OCI-LY7 (cell line): ENCODE measurements at regions of chr3 and their contacts with region 1.

Region 1: GRCh38 chr3:157088601-157089454 is 71.1 kb downstream of the CCNL1 start:
- DNase-seq: peak; percentile 95
- H3K4me3 ChIP-seq: peak overlapping the region; percentile 72
- H3K27ac ChIP-seq: peak overlapping the region; percentile 77
- H3K4me1 ChIP-seq: peaks cover 24% of the 10 kb centered on the region
- CTCF ChIP-seq: peak; percentile 43; the same call in 1 of the 2 replicates

Region 2: GRCh38 chr3:156554842-156555687 is 533.8 kb before region 1 on chr3 and contains the start of gene SSR3:
- CTCF ChIA-PET with region 1: no interaction called
- POLR2A ChIA-PET with region 1: interaction called, 13 read pairs
- intact Hi-C with region 1: loop called (anchors 2 kb)
- DNase-seq: peak; percentile 99
- H3K4me3 ChIP-seq: peak within 1 kb of the TSS; percentile 96
- H3K27ac ChIP-seq: peak within 1 kb of the TSS; percentile 28
- H3K4me1 ChIP-seq: peaks cover 11% of the 10 kb centered on the region
- CTCF ChIP-seq: no peak
- total RNA-seq, gene SSR3: 61.2 and 63.3 TPM in 2 replicates

Region 3: DNA sequence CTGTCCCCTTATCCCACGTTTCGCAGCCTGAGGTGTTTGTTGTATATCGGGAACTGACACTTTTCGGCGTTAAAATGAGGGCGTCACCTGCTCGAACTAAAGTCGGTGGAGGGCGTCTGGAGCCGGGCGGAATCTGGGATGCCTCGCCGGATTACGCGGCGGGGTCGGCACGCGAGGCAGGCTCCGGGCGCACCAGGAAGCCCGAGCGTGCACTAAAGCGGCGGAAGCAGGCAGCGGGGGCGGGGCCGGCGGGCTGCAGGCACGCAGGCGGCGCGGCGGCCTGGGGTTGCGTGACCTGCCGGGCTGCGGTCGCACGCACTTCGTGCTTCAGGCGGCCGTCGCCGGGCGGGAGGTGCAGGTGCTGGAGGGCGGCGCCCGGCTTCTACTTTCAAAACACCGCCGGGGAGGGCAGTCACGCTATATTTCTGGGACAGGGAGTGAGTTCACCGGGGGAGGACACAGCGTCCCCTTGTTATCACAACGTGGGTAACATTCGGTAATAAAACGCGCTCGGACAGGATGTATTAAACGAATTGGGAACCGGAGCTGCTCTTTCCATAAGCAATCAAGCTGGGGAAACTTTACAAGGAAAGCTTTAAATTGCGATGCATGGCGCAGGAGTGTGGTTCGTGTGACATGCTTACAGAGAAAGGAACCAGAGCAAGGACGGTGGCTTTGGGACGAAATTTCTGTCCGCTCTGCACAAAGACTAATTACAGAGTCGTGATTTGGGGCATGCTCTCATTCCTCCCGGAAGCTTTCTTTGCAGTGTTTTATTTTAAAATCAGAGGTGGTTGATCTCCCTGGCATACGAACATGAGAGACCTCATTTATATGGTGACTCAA is 271.8 kb before region 1 on chr3:
- CTCF ChIA-PET with region 1: no interaction called
- POLR2A ChIA-PET with region 1: interaction called, 12 read pairs
- intact Hi-C with region 1: loop called (anchors 1 kb)
- DNase-seq: peak; percentile 72
- H3K4me3 ChIP-seq: peak overlapping the region; percentile 65
- H3K27ac ChIP-seq: no peak overlapping the region
- H3K4me1 ChIP-seq: peaks cover 6% of the 10 kb centered on the region
- CTCF ChIP-seq: no peak; the same call in 1 of the 2 replicates

Region 4: DNA sequence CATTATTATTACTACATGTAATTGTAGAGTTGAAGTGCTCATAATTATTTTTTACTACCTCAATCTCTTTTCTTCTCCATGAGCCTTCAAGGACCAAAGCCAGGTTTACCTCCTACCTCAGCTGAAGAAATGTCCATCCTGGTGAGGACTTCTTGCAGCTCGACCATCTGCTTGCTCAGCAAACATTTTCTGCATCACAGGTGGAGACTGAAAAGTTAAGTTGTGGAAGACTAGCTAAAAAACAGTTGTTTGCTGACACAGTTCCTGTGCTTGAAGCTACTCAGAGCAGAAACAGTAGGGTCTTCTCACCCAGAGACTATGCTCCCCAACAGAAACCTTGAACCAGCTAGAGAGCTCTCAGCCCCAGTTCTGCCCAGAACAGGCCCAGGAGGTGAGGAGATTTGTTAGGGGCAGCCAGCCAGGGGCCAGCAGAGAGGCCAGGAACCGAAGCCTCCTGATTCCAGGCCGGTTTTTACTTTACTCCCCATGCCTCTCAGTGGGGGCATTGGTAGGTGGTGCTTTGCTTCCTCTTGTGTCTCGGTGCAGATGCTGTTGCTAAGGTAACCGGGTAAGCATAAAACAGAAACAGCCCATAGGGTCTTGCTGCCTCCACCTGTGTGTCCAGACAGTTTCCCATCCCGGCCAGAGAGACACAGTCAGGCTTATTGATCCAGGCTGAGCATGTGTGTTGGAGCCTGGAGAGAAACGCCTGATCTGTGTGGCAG is 16.3 kb after region 1 on chr3:
- CTCF ChIA-PET with region 1: interaction called, 5 read pairs
- POLR2A ChIA-PET with region 1: interaction called, 171 read pairs
- intact Hi-C with region 1: no loop called
- DNase-seq: peak; percentile 87
- H3K4me3 ChIP-seq: peak overlapping the region; percentile 43
- H3K27ac ChIP-seq: peak overlapping the region; percentile 69
- H3K4me1 ChIP-seq: peaks cover 34% of the 10 kb centered on the region
- CTCF ChIP-seq: no peak

Region 5: GRCh38 chr3:157130467-157131251 is 41.8 kb after region 1 on chr3:
- CTCF ChIA-PET with region 1: interaction called, 5 read pairs
- POLR2A ChIA-PET with region 1: interaction called, 23 read pairs
- intact Hi-C with region 1: loop called (anchors 2 kb)
- DNase-seq: peak; percentile 46
- H3K4me3 ChIP-seq: no peak overlapping the region
- H3K27ac ChIP-seq: no peak overlapping the region
- H3K4me1 ChIP-seq: peaks cover 21% of the 10 kb centered on the region
- CTCF ChIP-seq: peak; percentile 87

Region 6: GRCh38 chr3:157174649-157175498 is 86.0 kb after region 1 on chr3:
- CTCF ChIA-PET with region 1: no interaction called
- POLR2A ChIA-PET with region 1: interaction called, 20 read pairs
- intact Hi-C with region 1: no loop called
- DNase-seq: peak; percentile 100
- H3K4me3 ChIP-seq: peak overlapping the region; percentile 88
- H3K27ac ChIP-seq: peak overlapping the region; percentile 86
- H3K4me1 ChIP-seq: peaks cover 26% of the 10 kb centered on the region
- CTCF ChIP-seq: no peak